H1 (cell line): ENCODE measurements at regions of chr15 and their contacts with region 1.

Region 1: DNA sequence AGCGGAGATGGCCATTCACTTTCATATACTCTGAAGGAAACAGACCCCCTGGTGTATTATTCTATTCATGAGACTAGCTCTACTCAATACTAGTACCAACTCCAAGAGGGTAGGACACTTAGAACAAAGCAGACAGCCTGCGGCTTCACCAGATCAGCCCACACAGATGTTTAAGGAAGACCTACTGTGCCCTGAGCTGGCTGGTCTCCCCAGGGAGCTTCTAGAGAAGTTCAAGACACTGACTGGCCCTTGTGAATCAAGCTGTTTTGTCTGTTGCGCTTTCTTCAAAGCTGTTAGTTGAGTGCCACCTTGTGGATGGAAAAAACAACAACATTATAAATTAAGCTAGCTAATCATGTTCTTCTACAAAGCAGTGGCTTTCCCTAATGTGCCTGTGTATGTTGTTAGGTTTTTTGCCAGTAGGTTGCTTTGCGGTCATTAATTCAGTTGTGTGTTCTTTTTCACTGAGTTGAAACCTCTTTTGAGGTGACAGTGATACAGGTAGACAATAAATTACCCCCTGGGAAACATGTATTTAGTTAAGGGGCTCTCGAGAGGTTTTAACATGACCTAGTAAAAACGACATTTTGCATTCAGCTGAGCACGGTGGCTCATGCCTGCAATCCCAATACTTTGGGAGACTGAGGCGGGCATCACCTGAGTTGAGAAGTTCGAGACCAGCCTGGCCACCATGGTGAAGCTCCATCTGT is 64.2 kb upstream of the MYZAP start:
- DNase-seq: peak; percentile 50 to 63
- H3K4me3 ChIP-seq: no peak overlapping the region
- H3K27ac ChIP-seq: no peak overlapping the region
- H3K4me1 ChIP-seq: peaks cover 0 to 5% (median 0%) of the 10 kb centered on the region in 4 experiments; a peak in 1 of 7 replicates
- H3K27me3 ChIP-seq: no peaks in the 10 kb centered on the region
- CTCF ChIP-seq: peak in 2 of 3 experiments; percentile 62 to 67; a peak in 3 of 4 replicates
- EP300 ChIP-seq: no peak
- POLR2A ChIP-seq: no peak
- RAD21 ChIP-seq: peak; percentile 88 to 89

Region 2: GRCh38 chr15:57323806-57324589 is 203.5 kb before region 1 on chr15:
- CTCF ChIA-PET with region 1: interaction called, 17 read pairs
- POLR2A ChIA-PET with region 1: no interaction called
- DNase-seq: no peak
- H3K4me3 ChIP-seq: no peak overlapping the region
- H3K27ac ChIP-seq: no peak overlapping the region
- H3K4me1 ChIP-seq: peaks cover 2 to 13% (median 5%) of the 10 kb centered on the region in 4 experiments; a peak in 6 of 7 replicates
- H3K27me3 ChIP-seq: no peaks in the 10 kb centered on the region; a peak in 1 of 7 replicates
- CTCF ChIP-seq: no peak
- EP300 ChIP-seq: no peak
- POLR2A ChIP-seq: no peak
- RAD21 ChIP-seq: no peak

Region 3: DNA sequence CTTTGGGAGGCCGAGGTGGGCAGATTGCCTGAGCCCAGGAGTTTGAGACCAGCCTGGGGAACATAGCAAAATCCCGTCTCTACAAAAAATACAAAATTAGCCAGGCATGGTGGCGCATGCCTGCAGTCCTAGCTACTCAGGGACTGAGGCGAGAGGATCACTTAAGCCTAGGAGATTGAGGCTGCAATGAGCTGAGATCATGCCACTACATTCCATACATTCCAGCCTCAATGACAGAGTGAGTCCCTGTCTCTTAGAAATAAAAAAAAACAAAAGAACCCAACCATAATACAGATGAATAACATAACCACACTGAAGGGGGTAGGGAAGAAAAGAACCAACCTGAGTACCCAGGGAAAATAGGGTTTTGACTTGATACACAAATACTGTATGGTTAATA is 170.9 kb before region 1 on chr15:
- CTCF ChIA-PET with region 1: interaction called, 27 read pairs
- POLR2A ChIA-PET with region 1: no interaction called
- DNase-seq: no peak
- H3K4me3 ChIP-seq: peak overlapping the region in 1 of 4 experiments; percentile 11; a peak in 1 of 8 replicates
- H3K27ac ChIP-seq: 0 out of 2 replicates have a peak overlapping the region, but pooled peaks have one; percentile 8
- H3K4me1 ChIP-seq: peaks cover 2 to 28% (median 13%) of the 10 kb centered on the region in 4 experiments; a peak in 5 of 7 replicates
- H3K27me3 ChIP-seq: no peaks in the 10 kb centered on the region
- CTCF ChIP-seq: no peak
- EP300 ChIP-seq: no peak
- POLR2A ChIP-seq: no peak; a peak in 1 of 3 replicates
- RAD21 ChIP-seq: no peak

Region 4: DNA sequence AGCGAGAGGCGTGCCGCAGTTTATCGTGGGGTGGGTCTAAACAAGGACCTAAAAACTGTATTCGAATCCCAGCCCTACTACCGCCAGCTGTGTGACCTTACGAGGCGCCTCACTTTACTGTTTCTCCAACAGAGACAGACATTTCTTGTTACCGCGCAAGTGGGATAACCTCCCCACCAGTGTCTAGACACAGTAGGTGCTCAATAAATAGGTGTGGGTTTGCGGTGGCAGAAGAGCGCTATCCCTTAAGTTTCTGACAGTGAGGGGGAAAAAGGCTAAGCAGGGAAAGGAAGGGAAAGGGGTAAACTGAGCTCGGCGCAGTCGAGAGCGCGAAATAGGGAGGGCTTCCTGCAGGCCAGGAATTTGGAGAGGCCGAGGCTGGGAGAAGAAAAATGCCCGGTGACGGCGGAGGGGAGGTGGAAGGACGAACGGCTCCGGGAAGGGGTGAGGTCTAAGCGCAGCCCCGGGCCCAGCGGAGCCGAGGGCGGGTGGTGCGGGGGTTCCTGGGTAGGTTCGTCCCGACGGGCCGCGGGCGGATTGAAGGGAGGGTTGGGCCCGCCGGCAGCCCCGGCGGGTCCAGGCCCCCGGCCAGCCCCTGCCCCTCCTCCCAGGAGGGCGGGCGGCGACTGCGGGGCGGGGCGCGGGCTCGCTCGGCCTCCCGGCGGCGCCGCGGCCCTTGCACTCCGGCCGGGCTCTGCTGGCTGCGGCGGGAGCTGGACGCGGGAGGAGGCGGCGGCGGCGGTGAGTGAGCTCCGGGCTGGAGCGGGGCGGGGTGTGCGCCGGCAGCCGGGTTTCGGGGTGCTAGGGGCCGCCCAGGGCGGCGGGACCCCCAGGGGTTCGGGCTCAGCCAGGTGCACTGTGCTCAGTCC is 151.5 kb before region 1 on chr15 and contains the start of gene CGNL1:
- CTCF ChIA-PET with region 1: interaction called, 12 read pairs
- POLR2A ChIA-PET with region 1: no interaction called
- DNase-seq: peak in 1 of 2 experiments; percentile 77
- H3K4me3 ChIP-seq: peak within 1 kb of the TSS; percentile 59 to 66 (median 64)
- H3K27ac ChIP-seq: no peak within 1 kb of the TSS
- H3K4me1 ChIP-seq: peaks cover 10 to 23% (median 18%) of the 10 kb centered on the region in 4 experiments; a peak in 6 of 7 replicates
- H3K27me3 ChIP-seq: peaks cover 0 to 10% (median 5%) of the 10 kb centered on the region in 4 experiments; a peak in 4 of 7 replicates
- CTCF ChIP-seq: no peak
- EP300 ChIP-seq: no peak
- POLR2A ChIP-seq: no peak; a peak in 1 of 3 replicates
- RAD21 ChIP-seq: no peak
- total RNA-seq, gene CGNL1: 72.7 and 75.6 TPM in 2 replicates

Region 5: DNA sequence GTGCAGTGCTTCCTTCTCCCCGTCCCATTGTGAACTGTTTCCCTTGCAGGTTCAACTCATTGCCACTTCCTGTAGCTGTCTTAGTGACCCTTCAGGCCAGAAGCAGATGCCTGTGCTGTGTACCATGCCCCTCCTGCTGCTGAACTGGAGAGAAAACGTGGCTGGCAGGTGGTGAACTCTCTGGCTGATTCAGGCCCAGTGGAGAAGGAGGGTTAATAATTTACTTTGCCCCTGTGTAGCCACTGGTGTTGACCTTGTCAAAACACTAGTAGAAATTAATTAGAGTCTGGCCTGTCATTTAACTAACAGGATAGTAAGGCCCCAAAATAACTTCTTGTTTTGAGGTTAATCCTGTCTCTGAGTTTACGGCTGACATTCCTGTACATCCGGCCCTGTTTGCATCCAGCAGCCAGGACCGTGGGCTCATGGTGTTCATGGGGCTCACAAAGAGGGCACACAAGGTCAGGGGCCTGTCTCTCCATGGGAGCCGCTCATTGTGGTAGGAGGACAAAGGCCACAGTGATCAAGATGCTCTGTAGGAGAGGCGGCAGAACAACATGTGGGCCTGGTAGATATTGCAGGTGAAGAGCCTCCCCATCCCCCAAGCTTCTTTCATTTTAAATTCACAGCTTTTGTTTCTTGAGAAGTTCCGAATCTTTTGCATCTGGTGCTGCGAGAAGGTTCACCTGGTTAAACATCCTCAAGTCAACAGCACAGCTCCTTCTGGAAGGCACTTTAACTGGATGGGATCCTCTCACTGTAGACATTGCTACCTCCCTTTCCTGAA is 49.6 kb before region 1 on chr15:
- CTCF ChIA-PET with region 1: interaction called, 11 read pairs
- POLR2A ChIA-PET with region 1: no interaction called
- DNase-seq: no peak
- H3K4me3 ChIP-seq: no peak overlapping the region
- H3K27ac ChIP-seq: peak overlapping the region; percentile 52
- H3K4me1 ChIP-seq: peaks cover 7 to 19% (median 13%) of the 10 kb centered on the region in 4 experiments
- H3K27me3 ChIP-seq: no peaks in the 10 kb centered on the region
- CTCF ChIP-seq: no peak
- EP300 ChIP-seq: no peak; a peak in 1 of 3 replicates
- POLR2A ChIP-seq: no peak
- RAD21 ChIP-seq: no peak

Region 6: DNA sequence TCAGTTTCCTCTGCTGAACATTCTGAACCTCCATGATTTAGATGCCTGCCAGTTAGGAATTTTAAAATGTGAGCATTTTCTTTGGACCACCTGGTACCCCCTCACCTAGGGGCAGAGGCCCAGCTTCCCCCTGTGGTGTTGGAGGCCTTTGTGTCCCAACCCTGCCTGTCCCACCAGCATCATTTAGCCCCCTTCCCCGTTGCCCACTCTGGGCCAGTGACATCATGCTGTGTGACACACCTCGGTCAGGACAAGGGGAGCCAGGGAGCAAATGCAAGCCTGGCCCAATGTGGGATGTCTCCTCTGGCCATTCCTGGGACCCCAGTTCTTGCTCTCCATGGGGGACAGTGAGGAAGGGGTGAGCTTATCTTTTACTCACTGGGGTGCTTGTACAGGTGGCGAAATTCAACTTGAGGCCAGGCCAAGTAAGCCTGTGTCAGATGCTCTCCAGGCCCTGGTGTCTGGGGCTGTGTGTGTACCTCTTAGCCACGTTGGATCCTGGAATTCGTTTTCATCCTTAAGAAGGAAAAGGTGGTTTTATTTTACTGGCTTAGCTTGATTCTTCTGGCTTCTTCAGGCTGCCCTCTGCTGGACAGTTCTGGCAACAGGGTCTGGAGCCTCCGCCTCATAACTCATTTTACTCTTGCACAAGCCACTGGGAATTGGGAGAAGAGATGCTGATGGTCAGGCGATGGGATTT is 14.4 kb after region 1 on chr15:
- CTCF ChIA-PET with region 1: interaction called, 108 read pairs
- POLR2A ChIA-PET with region 1: interaction called, 9 read pairs
- DNase-seq: peak in 1 of 2 experiments; percentile 83
- H3K4me3 ChIP-seq: no peak overlapping the region
- H3K27ac ChIP-seq: no peak overlapping the region
- H3K4me1 ChIP-seq: 0 out of 7 replicates have a peak, but pooled peaks cover 0 to 1% (median 0%) of the 10 kb centered on the region in 4 experiments
- H3K27me3 ChIP-seq: no peaks in the 10 kb centered on the region
- CTCF ChIP-seq: peak; percentile 63 to 85 (median 70)
- EP300 ChIP-seq: no peak
- POLR2A ChIP-seq: no peak
- RAD21 ChIP-seq: peak; percentile 56 to 65